Sigmoid colon (tissue), 7 donors: ENCODE measurements at regions of chr4 and their contacts with region 1.

Region 1: DNA sequence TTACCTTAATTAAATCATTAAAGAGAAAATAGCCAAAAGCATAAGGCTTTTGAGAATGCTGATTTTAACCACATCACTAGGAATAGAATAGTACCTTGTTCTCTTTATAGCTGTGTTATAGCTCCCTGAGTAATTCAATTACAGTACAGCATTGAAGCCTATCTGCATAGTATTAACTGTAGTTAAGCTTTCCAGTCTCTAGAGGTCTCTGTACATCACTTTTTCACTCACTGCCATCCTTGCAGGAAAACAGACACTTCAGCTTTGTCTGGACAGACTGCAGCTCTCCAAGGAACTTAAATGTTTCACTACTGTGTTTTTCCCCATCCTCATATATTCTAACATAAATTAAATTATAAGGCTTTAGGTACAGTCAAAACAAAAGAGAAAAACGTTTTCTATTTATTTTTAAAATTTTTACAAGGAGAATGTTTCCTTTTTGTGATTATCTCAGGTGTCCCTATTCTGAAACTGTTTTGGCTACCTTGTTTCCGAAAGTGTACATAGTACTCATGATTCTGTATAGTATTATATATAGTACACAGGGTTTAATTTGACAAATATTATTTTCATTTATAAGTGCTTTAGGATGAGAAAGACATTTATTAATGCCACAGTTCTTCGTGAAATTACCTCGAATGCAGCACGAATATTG is 407.9 kb downstream of the PCDH18 start:
- DNase-seq: no peak
- H3K4me3 ChIP-seq: peak overlapping the region; percentile 17 to 44 (median 38)
- H3K27ac ChIP-seq: no peak overlapping the region
- H3K4me1 ChIP-seq: no peaks in the 10 kb centered on the region
- H3K27me3 ChIP-seq: no peaks in the 10 kb centered on the region
- CTCF ChIP-seq: peak; percentile 16 to 59 (median 46)
- EP300 ChIP-seq: no peak
- POLR2A ChIP-seq: no peak

Region 2: GRCh38 chr4:137106287-137106686 is 18.1 kb before region 1 on chr4:
- intact Hi-C with region 1: no loop called
- DNase-seq: no peak
- H3K4me3 ChIP-seq: no peak overlapping the region
- H3K27ac ChIP-seq: no peak overlapping the region
- H3K4me1 ChIP-seq: no peaks in the 10 kb centered on the region
- H3K27me3 ChIP-seq: no peaks in the 10 kb centered on the region
- CTCF ChIP-seq: no peak
- EP300 ChIP-seq: no peak
- POLR2A ChIP-seq: no peak

Region 3: GRCh38 chr4:137156054-137156453 is 31.6 kb after region 1 on chr4:
- intact Hi-C with region 1: no loop called
- DNase-seq: no peak
- H3K4me3 ChIP-seq: no peak overlapping the region
- H3K27ac ChIP-seq: no peak overlapping the region
- H3K4me1 ChIP-seq: no peaks in the 10 kb centered on the region
- H3K27me3 ChIP-seq: no peaks in the 10 kb centered on the region
- CTCF ChIP-seq: no peak
- EP300 ChIP-seq: no peak
- POLR2A ChIP-seq: no peak

Region 4: DNA sequence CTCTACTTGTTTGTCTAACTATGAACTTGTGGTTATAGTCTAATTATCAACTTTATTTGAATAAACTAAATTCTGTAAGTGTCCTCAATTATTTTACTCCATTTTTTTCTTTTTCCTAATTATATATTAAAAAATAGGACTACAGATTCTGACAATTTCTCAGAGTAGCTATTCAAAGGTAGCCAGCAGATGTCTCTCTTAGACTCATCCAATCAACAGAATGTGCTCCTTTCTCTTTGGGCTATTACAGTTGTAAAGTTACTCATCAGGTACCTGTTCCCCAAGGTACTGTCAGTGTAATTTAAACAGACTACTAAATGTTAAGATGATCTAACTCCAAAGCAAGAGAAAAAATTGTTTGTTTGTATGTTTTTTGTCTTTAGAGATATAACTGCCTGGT is 159.3 kb after region 1 on chr4:
- intact Hi-C with region 1: loop called (anchors 5 kb)
- DNase-seq: no peak
- H3K4me3 ChIP-seq: no peak overlapping the region
- H3K27ac ChIP-seq: no peak overlapping the region
- H3K4me1 ChIP-seq: no peaks in the 10 kb centered on the region
- H3K27me3 ChIP-seq: no peaks in the 10 kb centered on the region
- CTCF ChIP-seq: peak in 2 of 4 experiments; percentile 29
- EP300 ChIP-seq: no peak
- POLR2A ChIP-seq: no peak

Region 5: DNA sequence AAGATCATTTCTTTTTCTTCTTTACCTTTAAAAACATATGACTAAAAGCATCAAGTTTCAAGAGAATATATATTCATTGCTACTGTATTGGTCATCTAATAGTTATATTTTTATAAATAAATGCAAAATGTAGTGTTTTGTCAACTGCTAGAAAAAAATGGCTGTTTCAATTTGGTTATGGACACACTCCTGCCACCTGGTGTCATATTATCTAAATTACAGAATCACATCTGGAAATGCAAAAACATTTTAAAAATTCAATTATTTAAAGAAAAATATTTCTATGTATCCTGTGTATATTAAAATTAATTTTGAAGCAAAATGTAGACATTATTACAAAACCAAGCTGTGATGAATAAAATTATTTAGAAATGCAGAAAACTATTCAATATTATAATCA is 737.3 kb after region 1 on chr4:
- intact Hi-C with region 1: loop called (anchors 2 kb)
- DNase-seq: no peak
- H3K4me3 ChIP-seq: no peak overlapping the region
- H3K27ac ChIP-seq: no peak overlapping the region
- H3K4me1 ChIP-seq: no peaks in the 10 kb centered on the region
- H3K27me3 ChIP-seq: no peaks in the 10 kb centered on the region
- CTCF ChIP-seq: peak in 3 of 4 experiments; percentile 11 to 47 (median 20)
- EP300 ChIP-seq: no peak
- POLR2A ChIP-seq: no peak

Region 6: GRCh38 chr4:138053641-138054301 is 929.4 kb after region 1 on chr4:
- intact Hi-C with region 1: no loop called
- DNase-seq: no peak
- H3K4me3 ChIP-seq: no peak overlapping the region
- H3K27ac ChIP-seq: peak overlapping the region in 1 of 4 donors; percentile 59
- H3K4me1 ChIP-seq: peaks cover 0 to 15% (median 8%) of the 10 kb centered on the region in 4 donors
- H3K27me3 ChIP-seq: no peaks in the 10 kb centered on the region
- CTCF ChIP-seq: no peak
- EP300 ChIP-seq: no peak
- POLR2A ChIP-seq: no peak

Region 7: GRCh38 chr4:138090150-138090917 is 965.9 kb after region 1 on chr4:
- intact Hi-C with region 1: loop called (anchors 2 kb)
- DNase-seq: peak; percentile 70
- H3K4me3 ChIP-seq: peak overlapping the region in 3 of 4 donors; percentile 25 to 38 (median 28)
- H3K27ac ChIP-seq: no peak overlapping the region
- H3K4me1 ChIP-seq: peaks cover 0 to 22% (median 15%) of the 10 kb centered on the region in 4 donors
- H3K27me3 ChIP-seq: no peaks in the 10 kb centered on the region
- CTCF ChIP-seq: peak; percentile 53 to 79 (median 66)
- EP300 ChIP-seq: no peak
- POLR2A ChIP-seq: no peak